Dorsolateral prefrontal cortex (tissue), 120 donors: ENCODE measurements at regions of chr2 and their contacts with region 1.

Region 1: GRCh38 chr2:47043142-47043890 is 111.8 kb downstream of the STPG4 start:
- DNase-seq: peak in 2 of 10 donors; percentile 49 to 54
- H3K4me3 ChIP-seq: no peak overlapping the region
- H3K27ac ChIP-seq: peak overlapping the region; percentile 40 to 98 (median 88)
- H3K27me3 ChIP-seq: no peaks in the 10 kb centered on the region
- CTCF ChIP-seq: peak in 30 of 56 donors; percentile 9 to 55 (median 34)

Region 2: GRCh38 chr2:46812361-46813024 is 230.8 kb before region 1 on chr2:
- intact Hi-C with region 1: no loop called
- DNase-seq: peak in 3 of 10 donors; percentile 40 to 51 (median 49)
- H3K4me3 ChIP-seq: peak overlapping the region in 15 of 59 donors; percentile 2 to 30 (median 17)
- H3K27ac ChIP-seq: peak overlapping the region in 22 of 59 donors; percentile 1 to 91 (median 41)
- H3K27me3 ChIP-seq: no peaks in the 10 kb centered on the region
- CTCF ChIP-seq: no peak

Region 3: DNA sequence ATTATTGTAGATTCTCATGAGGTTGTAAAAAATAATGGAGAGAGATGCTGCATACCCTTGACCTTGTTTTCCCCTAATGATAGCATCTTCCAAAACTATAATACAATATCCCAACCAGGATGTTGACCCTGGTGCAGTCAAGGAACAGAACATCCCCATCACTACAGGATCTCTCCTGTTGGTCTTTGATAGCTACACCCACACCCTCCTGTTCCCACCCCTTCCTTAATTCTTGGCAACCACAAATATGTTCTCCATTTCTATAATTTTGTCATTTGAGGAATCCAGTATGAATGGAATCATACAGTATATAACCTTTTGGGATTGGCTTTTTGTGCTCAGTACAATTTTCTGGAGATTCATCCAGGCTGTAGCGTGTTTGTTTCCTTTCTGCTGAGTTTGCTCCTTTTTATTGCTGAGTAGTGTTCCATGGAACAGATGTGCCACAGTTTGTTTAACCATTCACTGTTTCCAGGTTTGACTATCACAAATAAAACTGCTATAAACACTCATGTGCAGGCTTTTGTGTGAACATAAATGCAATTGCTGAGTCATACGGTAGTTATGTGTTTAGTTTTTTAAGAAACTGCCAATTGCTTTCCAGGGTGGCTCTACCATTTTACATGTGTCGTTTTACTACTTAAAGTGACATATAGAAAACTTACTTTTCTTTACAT is 149.9 kb before region 1 on chr2:
- intact Hi-C with region 1: no loop called
- DNase-seq: no peak
- H3K4me3 ChIP-seq: no peak overlapping the region
- H3K27ac ChIP-seq: no peak overlapping the region
- H3K27me3 ChIP-seq: no peaks in the 10 kb centered on the region
- CTCF ChIP-seq: no peak

Region 4: GRCh38 chr2:47272031-47272864 is 228.9 kb after region 1 on chr2:
- intact Hi-C with region 1: loop called in 1 of 2 experiments (anchors 10 kb)
- DNase-seq: peak; percentile 48 to 80 (median 54)
- H3K4me3 ChIP-seq: peak overlapping the region; percentile 27 to 70 (median 53)
- H3K27ac ChIP-seq: peak overlapping the region; percentile 19 to 94 (median 88)
- H3K27me3 ChIP-seq: no peaks in the 10 kb centered on the region
- CTCF ChIP-seq: peak; percentile 84 to 100 (median 99)

Region 5: GRCh38 chr2:47323009-47323821 is 279.9 kb after region 1 on chr2:
- intact Hi-C with region 1: loop called in 1 of 2 experiments (anchors 5 kb)
- DNase-seq: peak; percentile 58 to 87 (median 78)
- H3K4me3 ChIP-seq: no peak overlapping the region
- H3K27ac ChIP-seq: peak overlapping the region in 52 of 59 donors; percentile 3 to 100 (median 90)
- H3K27me3 ChIP-seq: no peaks in the 10 kb centered on the region
- CTCF ChIP-seq: peak; percentile 72 to 99 (median 97)